PC-9 (cell line): ENCODE measurements at regions of chr1 and their contacts with region 1.

Region 1: DNA sequence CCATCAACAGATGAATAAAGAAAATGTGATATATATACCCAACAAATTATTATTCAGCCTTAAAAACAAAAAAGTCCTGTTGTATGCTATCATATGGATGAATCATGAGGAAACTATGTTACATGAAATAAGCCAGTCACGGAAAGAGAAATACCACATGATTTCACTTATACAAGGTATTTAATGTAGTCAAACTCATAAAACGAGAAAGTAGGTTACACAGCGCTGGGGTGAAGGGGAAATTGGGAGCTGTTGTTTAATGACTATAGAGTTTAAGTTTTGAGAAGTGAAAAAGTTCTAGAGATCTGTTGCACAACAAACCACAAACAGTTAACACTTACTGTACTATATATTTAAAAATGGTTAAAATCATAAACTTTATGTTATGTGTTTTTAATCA is 58.5 kb downstream of the SLC25A24 start:
- DNase-seq: no peak
- H3K4me3 ChIP-seq: no peak overlapping the region
- H3K27ac ChIP-seq: no peak overlapping the region
- H3K4me1 ChIP-seq: no peaks in the 10 kb centered on the region
- H3K27me3 ChIP-seq: no peaks in the 10 kb centered on the region
- CTCF ChIP-seq: no peak

Region 2: DNA sequence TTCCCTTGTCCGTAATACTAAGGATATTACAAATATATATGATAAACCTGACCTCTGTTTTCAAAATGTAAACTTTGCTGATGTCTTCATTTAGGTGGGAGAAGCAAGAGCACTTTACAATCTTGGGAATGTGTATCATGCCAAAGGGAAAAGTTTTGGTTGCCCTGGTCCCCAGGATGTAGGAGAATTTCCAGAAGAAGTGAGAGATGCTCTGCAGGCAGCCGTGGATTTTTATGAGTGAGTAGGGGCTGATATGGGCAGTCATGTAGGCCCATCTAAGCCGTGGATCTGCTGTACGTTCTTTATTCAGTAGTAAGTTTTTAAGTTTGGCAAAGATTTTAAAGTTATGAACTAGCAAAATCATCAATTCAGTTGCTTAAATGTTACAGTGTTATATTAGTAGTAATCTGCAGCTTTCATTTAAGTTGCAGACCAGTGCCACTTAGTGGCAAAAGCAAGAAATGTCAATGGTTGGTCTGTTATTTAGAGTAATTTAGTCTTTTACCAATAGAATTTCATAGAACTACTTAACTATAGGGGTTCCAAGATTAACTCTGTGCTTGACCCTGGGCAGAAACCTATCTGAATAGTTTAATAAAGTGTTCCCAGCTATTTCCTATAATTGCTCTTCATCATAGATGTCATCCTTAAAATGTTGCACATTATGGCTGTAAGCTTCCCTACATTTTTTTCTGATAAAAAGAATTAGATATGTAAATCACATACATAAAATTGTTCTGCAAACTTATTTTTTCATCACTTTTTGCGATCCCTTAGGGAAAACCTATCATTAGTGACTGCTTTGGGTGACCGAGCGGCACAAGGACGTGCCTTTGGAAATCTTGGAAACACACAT is 756.5 kb after region 1 on chr1:
- CTCF ChIA-PET with region 1: interaction called, 3 read pairs
- POLR2A ChIA-PET with region 1: no interaction called
- intact Hi-C with region 1: loop called (anchors 10 kb)
- DNase-seq: peak in 1 of 2 experiments; percentile 77
- H3K4me3 ChIP-seq: no peak overlapping the region
- H3K27ac ChIP-seq: no peak overlapping the region
- H3K4me1 ChIP-seq: no peaks in the 10 kb centered on the region
- H3K27me3 ChIP-seq: no peaks in the 10 kb centered on the region
- CTCF ChIP-seq: peak; percentile 96